ENCODE measurements at regions of chr16 and their contacts with region 1.

Region 1: DNA sequence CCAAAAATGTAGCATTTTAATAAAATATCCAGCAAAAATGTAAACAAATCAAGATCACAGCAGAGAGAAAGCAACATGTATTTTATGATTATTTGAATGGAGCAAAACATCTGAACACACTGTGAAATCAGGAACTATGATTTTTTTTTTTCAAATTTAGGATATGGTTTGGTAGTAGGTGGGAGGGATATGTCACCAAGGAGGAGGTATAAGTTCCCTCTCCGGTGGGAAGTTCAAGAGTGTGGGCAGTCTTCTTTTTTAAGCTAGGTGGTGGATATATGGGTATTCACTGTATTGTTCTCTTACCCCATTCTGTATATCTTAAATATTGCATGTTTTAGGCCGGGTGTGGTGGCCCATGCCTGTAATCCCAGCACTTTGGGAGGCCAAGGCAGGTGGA is 10.2 kb downstream of the CDR2 start:
- DNase-seq: no peak
- ATAC-seq: no peak
- H3K4me3 ChIP-seq: no peak overlapping the region
- H3K4me3 Mint-ChIP-seq: no peak overlapping the region
- H3K27ac ChIP-seq: no peak overlapping the region
- H3K27ac Mint-ChIP-seq: no peak overlapping the region
- H3K4me1 ChIP-seq: peaks cover 56% of the 10 kb centered on the region
- H3K4me1 Mint-ChIP-seq: peaks cover 76% of the 10 kb centered on the region
- H3K27me3 ChIP-seq: no peaks in the 10 kb centered on the region
- H3K27me3 Mint-ChIP-seq: no peaks in the 10 kb centered on the region
- CTCF ChIP-seq: no peak

Region 2: DNA sequence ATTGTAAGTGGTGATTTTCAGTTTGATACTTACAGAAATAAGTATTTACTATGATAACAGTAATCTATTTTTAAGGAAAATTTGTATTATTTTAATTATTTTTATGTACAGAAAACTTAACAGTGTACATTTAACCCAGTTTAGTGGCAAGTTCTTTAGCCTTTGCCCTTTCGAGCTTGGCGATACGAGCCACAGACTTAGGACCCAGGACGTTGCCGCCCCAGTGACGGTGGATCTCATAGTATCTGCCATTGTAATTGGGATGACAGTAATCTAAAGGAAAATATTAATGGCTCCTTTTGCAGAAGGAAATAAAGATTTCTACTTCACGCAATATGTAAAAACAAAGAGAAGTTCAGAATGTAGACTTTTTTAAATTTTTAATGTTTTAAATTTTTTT is 15.4 kb after region 1 on chr16:
- CTCF ChIA-PET with region 1: interaction called, 3 read pairs
- POLR2A ChIA-PET with region 1: interaction called, 18 read pairs
- intact Hi-C with region 1: loop called in 1 of 2 experiments (anchors 2 kb)
- DNase-seq: no peak
- ATAC-seq: no peak
- H3K4me3 ChIP-seq: no peak overlapping the region
- H3K4me3 Mint-ChIP-seq: no peak overlapping the region
- H3K27ac ChIP-seq: no peak overlapping the region
- H3K27ac Mint-ChIP-seq: peak overlapping the region; percentile 16
- H3K4me1 ChIP-seq: peaks cover 30% of the 10 kb centered on the region
- H3K4me1 Mint-ChIP-seq: peaks cover 31% of the 10 kb centered on the region
- H3K27me3 ChIP-seq: no peaks in the 10 kb centered on the region
- H3K27me3 Mint-ChIP-seq: no peaks in the 10 kb centered on the region
- CTCF ChIP-seq: no peak

Region 3: DNA sequence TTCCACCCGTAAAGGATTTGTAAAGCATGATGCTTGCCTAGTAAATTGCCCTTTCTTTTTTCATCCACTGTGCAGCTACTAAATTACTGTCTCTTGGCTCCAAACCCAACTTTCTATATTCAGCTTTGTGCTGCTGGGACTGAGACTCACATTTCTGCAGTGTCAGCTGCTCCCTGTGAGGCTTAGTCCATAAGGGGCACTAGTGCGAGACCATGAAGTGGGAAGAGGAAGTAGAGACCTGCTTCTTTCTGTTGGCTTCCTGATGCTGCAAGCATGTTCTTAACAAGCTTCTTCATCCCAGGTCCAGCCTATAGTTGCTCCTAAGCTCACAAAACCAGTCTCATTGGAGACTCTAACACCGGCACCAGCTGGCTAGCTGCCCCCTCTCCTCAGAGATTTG is 374.8 kb after region 1 on chr16:
- CTCF ChIA-PET with region 1: no interaction called
- POLR2A ChIA-PET with region 1: no interaction called
- intact Hi-C with region 1: no loop called
- DNase-seq: no peak
- ATAC-seq: no peak
- H3K4me3 ChIP-seq: no peak overlapping the region
- H3K4me3 Mint-ChIP-seq: no peak overlapping the region
- H3K27ac ChIP-seq: no peak overlapping the region
- H3K27ac Mint-ChIP-seq: no peak overlapping the region
- H3K4me1 ChIP-seq: no peaks in the 10 kb centered on the region
- H3K4me1 Mint-ChIP-seq: no peaks in the 10 kb centered on the region
- H3K27me3 ChIP-seq: no peaks in the 10 kb centered on the region
- H3K27me3 Mint-ChIP-seq: peaks cover 20% of the 10 kb centered on the region
- CTCF ChIP-seq: no peak